Left colon (tissue), 2 donors: ENCODE measurements at regions of chr6 and their contacts with region 1.

Region 1: DNA sequence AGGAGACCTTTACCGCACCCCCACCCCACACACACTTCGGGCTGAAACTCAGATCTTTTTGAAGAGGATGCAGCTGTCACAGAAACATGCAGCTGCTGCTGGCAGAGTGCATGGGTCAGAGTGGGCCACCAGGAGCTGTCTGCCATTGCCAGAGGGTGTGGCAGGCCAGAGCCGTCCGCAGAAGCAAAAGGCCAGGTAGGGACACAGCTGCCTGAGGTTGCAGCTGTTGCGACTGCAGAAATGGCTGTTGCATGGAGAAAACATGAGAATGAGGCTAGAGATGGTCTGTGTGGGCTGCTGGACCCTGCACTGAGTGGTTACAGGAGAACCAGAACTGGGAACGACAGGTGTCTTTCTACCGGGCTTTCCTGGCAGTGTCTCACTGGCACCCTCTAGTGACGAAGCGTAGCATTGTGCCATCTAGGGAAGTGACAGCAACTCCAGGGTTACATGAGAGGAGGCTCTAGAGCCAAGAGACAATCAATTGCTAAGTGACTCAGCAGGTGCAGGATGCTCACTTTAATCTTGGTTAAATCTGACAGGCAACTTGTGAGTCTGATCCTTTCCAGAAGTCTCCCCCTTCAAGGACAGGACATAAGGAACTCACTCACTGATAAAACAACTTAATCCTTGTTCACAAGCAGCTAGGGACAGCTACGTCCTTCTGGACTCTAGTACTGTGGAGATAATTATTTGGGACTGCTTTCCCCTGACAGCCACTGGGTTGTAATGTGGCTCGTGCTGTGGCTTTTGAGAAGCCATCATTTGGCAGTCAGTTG is 29.1 kb upstream of the SERPINB9 start:
- DNase-seq: peak; percentile 77 to 90
- ATAC-seq: peak; percentile 98

Region 2: DNA sequence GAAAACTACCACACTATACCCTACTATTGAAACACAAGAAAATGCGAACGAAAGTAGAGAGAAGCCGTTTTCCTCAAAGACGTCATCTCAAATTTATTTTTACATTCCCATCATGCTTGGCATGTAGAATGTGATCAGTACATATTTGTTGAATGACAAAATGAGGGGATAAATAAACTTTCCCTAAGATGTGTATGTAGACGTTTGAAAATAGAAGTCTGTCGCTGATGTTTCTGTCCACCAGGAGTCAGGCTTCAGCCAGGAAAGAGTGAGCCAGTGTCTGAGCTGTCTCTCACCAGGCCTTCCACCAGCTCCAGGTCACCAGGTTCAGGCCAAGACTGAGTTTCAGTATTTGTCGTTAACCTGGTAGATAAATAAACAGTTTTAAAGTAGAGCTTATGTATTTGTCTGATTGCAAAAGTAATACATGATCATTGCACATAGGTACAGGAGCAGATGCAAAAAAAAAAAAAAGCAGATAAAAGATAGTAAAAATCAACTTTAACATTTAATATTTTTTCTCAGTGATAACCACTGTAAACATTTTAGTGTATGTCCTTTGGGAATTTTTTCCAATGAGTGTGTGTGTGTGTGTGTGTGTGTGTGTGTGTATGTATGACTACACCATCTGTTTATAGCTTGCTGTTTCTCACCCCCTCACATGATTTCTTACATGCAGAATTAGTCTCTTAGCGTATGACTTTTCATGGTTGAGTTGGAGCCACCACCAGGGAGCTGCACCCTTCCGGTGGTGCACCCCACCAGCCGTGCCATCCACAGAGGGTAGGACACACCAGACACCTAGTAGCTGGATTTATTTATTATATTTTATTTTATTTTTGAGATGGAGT is 140.8 kb before region 1 on chr6:
- intact Hi-C with region 1: loop called in 1 of 2 experiments (anchors 5 kb)
- DNase-seq: peak; percentile 70 to 72
- ATAC-seq: peak; percentile 89

Region 3: DNA sequence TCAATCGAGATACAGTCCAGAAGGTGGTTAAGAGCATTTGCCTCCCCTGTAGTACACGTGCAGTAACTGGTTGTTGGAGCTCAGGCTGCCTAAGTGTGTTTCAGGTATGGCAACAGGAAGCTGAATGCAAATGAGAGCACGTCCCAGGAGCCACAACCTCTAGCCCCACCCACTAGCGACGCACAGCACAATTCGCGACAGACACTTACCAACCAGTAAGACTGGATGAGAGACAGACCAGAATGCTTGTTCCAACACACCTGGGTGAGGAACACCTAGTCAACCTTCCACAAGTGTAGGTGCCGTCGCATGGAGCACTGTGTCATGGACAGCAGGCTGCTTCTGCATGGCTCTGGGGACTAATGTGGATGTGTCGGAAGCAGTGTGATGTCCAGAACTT is 83.3 kb before region 1 on chr6:
- intact Hi-C with region 1: loop called (anchors 5 to 10 kb)
- DNase-seq: peak; percentile 67
- ATAC-seq: peak; percentile 82

Region 4: GRCh38 chr6:3147914-3148757 is 216.0 kb after region 1 on chr6:
- intact Hi-C with region 1: no loop called
- DNase-seq: no peak
- ATAC-seq: no peak